ENCODE measurements at regions of chr10 and their contacts with region 1.

Region 1: GRCh38 chr10:104231784-104232612 is at the start of gene CFAP43:
- DNase-seq: peak; percentile 97
- ATAC-seq: peak; percentile 99
- H3K4me3 ChIP-seq: peak within 1 kb of the TSS; percentile 52 to 86 (median 67)
- H3K4me3 Mint-ChIP-seq: peak within 1 kb of the TSS; percentile 89
- H3K27ac ChIP-seq: peak within 1 kb of the TSS in 1 of 2 donors; percentile 66
- H3K27ac Mint-ChIP-seq: peak within 1 kb of the TSS; percentile 84
- H3K4me1 ChIP-seq: peaks cover 6 to 13% of the 10 kb centered on the region in 2 donors
- H3K4me1 Mint-ChIP-seq: peaks cover 10% of the 10 kb centered on the region
- H3K27me3 ChIP-seq: peaks cover 0 to 19% (median 13%) of the 10 kb centered on the region in 4 experiments
- H3K27me3 Mint-ChIP-seq: peaks cover 26% of the 10 kb centered on the region
- CTCF ChIP-seq: no peak
- total RNA-seq, gene CFAP43: 0.12 TPM in 1 of 2 replicates, not detected in the other

Region 2: GRCh38 chr10:103336370-103336769 is 895.6 kb before region 1 on chr10:
- CTCF ChIA-PET with region 1: no interaction called
- POLR2A ChIA-PET with region 1: no interaction called
- intact Hi-C with region 1: no loop called
- DNase-seq: no peak
- ATAC-seq: no peak
- H3K4me3 ChIP-seq: no peak overlapping the region
- H3K4me3 Mint-ChIP-seq: no peak overlapping the region
- H3K27ac ChIP-seq: no peak overlapping the region
- H3K27ac Mint-ChIP-seq: no peak overlapping the region
- H3K4me1 ChIP-seq: no peaks in the 10 kb centered on the region
- H3K4me1 Mint-ChIP-seq: no peaks in the 10 kb centered on the region
- H3K27me3 ChIP-seq: no peaks in the 10 kb centered on the region
- H3K27me3 Mint-ChIP-seq: no peaks in the 10 kb centered on the region
- CTCF ChIP-seq: no peak

Region 3: DNA sequence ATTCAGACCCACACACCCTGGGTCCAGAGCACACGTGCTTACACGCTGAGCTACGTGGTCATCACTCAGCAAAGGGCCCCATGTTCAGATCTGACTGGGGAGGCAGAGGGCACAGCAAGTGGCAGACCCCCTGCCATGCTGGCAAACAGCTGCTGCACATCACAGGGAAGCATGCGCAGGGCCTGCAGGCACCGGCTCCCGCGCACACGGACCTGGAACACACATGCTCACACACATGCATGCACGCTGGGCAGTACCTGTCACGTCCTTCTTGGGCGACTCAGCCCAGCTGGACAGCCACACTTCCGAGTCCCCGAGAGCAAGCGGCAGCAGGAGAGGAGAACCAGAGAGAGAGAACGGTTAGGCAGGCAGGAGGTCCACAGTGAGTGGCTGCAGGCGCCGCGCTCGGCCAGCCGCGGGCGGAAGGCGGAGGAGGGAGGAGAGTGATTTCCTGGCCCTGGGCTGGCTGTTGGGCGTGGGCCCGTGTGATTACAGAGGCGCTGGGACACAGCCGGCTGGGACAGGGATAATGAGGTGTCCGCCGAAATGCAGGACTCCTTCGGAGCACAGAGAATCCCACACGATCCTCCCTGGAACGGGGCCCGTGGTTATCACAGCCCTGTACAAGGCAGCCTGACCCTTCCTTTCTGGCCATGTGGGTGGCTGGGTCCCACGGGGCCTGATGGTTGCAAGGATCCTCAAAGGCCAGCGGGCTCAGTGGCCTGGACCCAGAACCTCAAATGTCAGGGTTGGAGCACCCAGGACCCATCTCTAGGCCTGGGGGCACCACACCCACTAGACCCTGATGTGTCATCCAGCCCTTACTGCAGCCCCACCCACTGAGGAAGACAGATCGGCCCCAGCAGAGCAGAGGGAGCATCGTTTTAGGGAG is 563.4 kb before region 1 on chr10:
- CTCF ChIA-PET with region 1: no interaction called
- POLR2A ChIA-PET with region 1: no interaction called
- intact Hi-C with region 1: no loop called
- DNase-seq: no peak
- ATAC-seq: peak; percentile 47
- H3K4me3 ChIP-seq: peak overlapping the region in 3 of 5 experiments; percentile 6 to 21 (median 11)
- H3K4me3 Mint-ChIP-seq: peak overlapping the region; percentile 87
- H3K27ac ChIP-seq: no peak overlapping the region
- H3K27ac Mint-ChIP-seq: peak overlapping the region; percentile 78
- H3K4me1 ChIP-seq: peaks cover 9 to 11% of the 10 kb centered on the region in 2 donors
- H3K4me1 Mint-ChIP-seq: peaks cover 11% of the 10 kb centered on the region
- H3K27me3 ChIP-seq: peaks cover 0 to 3% (median 0%) of the 10 kb centered on the region in 4 experiments
- H3K27me3 Mint-ChIP-seq: no peaks in the 10 kb centered on the region
- CTCF ChIP-seq: no peak

Region 4: GRCh38 chr10:103918053-103918846 is 313.7 kb before region 1 on chr10 and contains the start of gene STN1:
- CTCF ChIA-PET with region 1: no interaction called
- POLR2A ChIA-PET with region 1: no interaction called
- intact Hi-C with region 1: loop called (anchors 1 kb)
- DNase-seq: peak; percentile 96
- ATAC-seq: peak; percentile 93
- H3K4me3 ChIP-seq: peak within 1 kb of the TSS; percentile 67 to 95 (median 94)
- H3K4me3 Mint-ChIP-seq: peak within 1 kb of the TSS; percentile 99
- H3K27ac ChIP-seq: peak within 1 kb of the TSS; percentile 78 to 85
- H3K27ac Mint-ChIP-seq: peak within 1 kb of the TSS; percentile 96
- H3K4me1 ChIP-seq: peaks cover 27 to 38% of the 10 kb centered on the region in 2 donors
- H3K4me1 Mint-ChIP-seq: peaks cover 33% of the 10 kb centered on the region
- H3K27me3 ChIP-seq: no peaks in the 10 kb centered on the region
- H3K27me3 Mint-ChIP-seq: no peaks in the 10 kb centered on the region
- CTCF ChIP-seq: no peak
- total RNA-seq, gene STN1: 16.3 and 16.8 TPM in 2 replicates

Region 5: GRCh38 chr10:104254493-104255310 is 22.7 kb after region 1 on chr10 and contains the start of gene GSTO1:
- CTCF ChIA-PET with region 1: no interaction called
- POLR2A ChIA-PET with region 1: no interaction called
- intact Hi-C with region 1: loop called (anchors 1 kb)
- DNase-seq: peak; percentile 68
- ATAC-seq: peak; percentile 87
- H3K4me3 ChIP-seq: peak within 1 kb of the TSS; percentile 87 to 95 (median 92)
- H3K4me3 Mint-ChIP-seq: peak within 1 kb of the TSS; percentile 99
- H3K27ac ChIP-seq: peak within 1 kb of the TSS; percentile 65 to 82
- H3K27ac Mint-ChIP-seq: peak within 1 kb of the TSS; percentile 97
- H3K4me1 ChIP-seq: peaks cover 13 to 14% of the 10 kb centered on the region in 2 donors
- H3K4me1 Mint-ChIP-seq: peaks cover 48% of the 10 kb centered on the region
- H3K27me3 ChIP-seq: peaks cover 0 to 4% (median 0%) of the 10 kb centered on the region in 4 experiments
- H3K27me3 Mint-ChIP-seq: peaks cover 13% of the 10 kb centered on the region
- CTCF ChIP-seq: no peak
- total RNA-seq, gene GSTO1: 36.4 and 37.7 TPM in 2 replicates

Region 6: GRCh38 chr10:104268716-104269645 is 37.0 kb after region 1 on chr10 and contains the start of gene GSTO2:
- CTCF ChIA-PET with region 1: interaction called, 3 read pairs
- POLR2A ChIA-PET with region 1: no interaction called
- intact Hi-C with region 1: loop called (anchors 1 kb)
- DNase-seq: peak; percentile 99
- ATAC-seq: peak; percentile 97
- H3K4me3 ChIP-seq: peak within 1 kb of the TSS; percentile 68 to 90 (median 86)
- H3K4me3 Mint-ChIP-seq: peak within 1 kb of the TSS; percentile 88
- H3K27ac ChIP-seq: peak within 1 kb of the TSS; percentile 90 to 95
- H3K27ac Mint-ChIP-seq: peak within 1 kb of the TSS; percentile 92
- H3K4me1 ChIP-seq: peaks cover 20 to 22% of the 10 kb centered on the region in 2 donors
- H3K4me1 Mint-ChIP-seq: peaks cover 37% of the 10 kb centered on the region
- H3K27me3 ChIP-seq: peaks cover 0 to 1% (median under 1%) of the 10 kb centered on the region in 4 experiments
- H3K27me3 Mint-ChIP-seq: no peaks in the 10 kb centered on the region
- CTCF ChIP-seq: no peak
- total RNA-seq, gene GSTO2: 0.89 and 1.4 TPM in 2 replicates